WTC11 (cell line): ENCODE measurements at regions of chr6 and their contacts with region 1.

Region 1: GRCh38 chr6:3848925-3849605 is at the start of gene FAM50B:
- DNase-seq: peak; percentile 98
- ATAC-seq: peak; percentile 98
- H3K4me3 Mint-ChIP-seq: peak within 1 kb of the TSS; percentile 80
- H3K27ac Mint-ChIP-seq: no peak within 1 kb of the TSS
- H3K4me1 Mint-ChIP-seq: peaks cover 9% of the 10 kb centered on the region
- H3K27me3 Mint-ChIP-seq: peaks cover 6% of the 10 kb centered on the region
- CTCF ChIP-seq: peak; percentile 100
- total RNA-seq, gene FAM50B: 2.1 to 3.6 TPM (median 3.3 TPM) in 3 replicates

Region 2: DNA sequence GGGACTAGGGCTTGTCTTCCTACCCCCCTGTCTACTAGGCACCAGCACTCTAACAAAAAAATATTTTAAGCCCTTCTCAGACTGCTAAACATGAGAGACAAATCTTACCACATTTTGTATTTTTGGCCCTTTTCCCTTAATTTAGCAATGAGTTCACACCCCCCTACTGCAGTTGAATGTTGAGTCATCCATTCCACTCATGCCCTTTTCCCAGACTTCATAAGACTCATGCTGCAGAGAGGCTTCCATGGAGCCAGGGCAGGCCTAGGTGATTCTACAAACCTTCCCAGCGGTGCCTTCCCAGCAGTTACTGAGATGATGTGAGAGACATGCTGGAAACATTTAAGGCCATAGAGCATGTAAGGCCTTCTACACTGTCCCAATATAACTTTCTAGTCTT is 151.5 kb before region 1 on chr6:
- CTCF ChIA-PET with region 1: no interaction called
- POLR2A ChIA-PET with region 1: no interaction called
- DNase-seq: no peak
- ATAC-seq: no peak
- H3K4me3 Mint-ChIP-seq: no peak overlapping the region
- H3K27ac Mint-ChIP-seq: no peak overlapping the region
- H3K4me1 Mint-ChIP-seq: no peaks in the 10 kb centered on the region
- H3K27me3 Mint-ChIP-seq: peaks cover 9% of the 10 kb centered on the region
- CTCF ChIP-seq: no peak

Region 3: GRCh38 chr6:3759646-3760232 is 89.3 kb before region 1 on chr6:
- CTCF ChIA-PET with region 1: interaction called, 45 read pairs
- POLR2A ChIA-PET with region 1: no interaction called
- DNase-seq: no peak
- ATAC-seq: no peak
- H3K4me3 Mint-ChIP-seq: no peak overlapping the region
- H3K27ac Mint-ChIP-seq: no peak overlapping the region; the same call in 1 of the 2 replicates
- H3K4me1 Mint-ChIP-seq: peaks cover 26% of the 10 kb centered on the region
- H3K27me3 Mint-ChIP-seq: peaks cover 7% of the 10 kb centered on the region
- CTCF ChIP-seq: no peak

Region 4: DNA sequence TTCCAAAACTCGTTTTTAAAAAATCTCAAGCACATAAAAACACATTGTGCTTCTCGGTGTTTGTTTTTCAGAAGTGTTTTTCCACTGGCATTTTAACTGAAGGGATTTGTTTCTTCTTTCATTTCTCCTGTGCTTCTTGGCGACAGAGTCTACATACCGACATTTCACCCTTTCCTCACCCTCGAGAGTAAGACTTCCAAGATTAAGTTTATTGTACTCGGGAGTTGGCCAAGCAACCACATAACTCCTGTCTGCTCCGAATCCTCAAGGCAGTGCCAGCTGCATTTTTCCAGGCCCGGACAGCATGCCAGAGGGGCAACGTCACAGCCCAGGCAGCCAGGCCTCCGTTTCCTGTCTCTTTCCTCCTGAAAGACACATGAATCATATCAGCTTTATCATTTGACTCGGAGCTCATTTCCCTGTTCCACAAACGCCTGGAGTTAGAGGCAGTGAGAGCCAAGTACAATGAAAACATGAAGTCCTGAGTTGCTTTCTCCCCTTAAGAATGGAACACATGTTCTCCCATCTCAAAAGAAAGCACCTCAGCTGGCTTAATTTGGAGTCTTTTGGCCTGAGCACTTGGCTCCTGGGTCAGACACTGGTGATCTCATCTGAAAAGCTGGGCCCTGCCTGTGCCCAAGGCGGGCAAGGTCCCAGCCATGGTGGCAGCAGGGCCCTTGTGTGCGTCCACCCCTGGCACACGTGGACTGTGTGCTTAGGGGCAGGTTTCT is 23.0 kb before region 1 on chr6:
- CTCF ChIA-PET with region 1: interaction called, 26 read pairs
- POLR2A ChIA-PET with region 1: no interaction called
- DNase-seq: no peak
- ATAC-seq: no peak; the same call in 1 of the 2 replicates
- H3K4me3 Mint-ChIP-seq: no peak overlapping the region
- H3K27ac Mint-ChIP-seq: no peak overlapping the region
- H3K4me1 Mint-ChIP-seq: peaks cover 28% of the 10 kb centered on the region
- H3K27me3 Mint-ChIP-seq: peaks cover 3% of the 10 kb centered on the region; the same call in 1 of the 2 replicates
- CTCF ChIP-seq: no peak

Region 5: DNA sequence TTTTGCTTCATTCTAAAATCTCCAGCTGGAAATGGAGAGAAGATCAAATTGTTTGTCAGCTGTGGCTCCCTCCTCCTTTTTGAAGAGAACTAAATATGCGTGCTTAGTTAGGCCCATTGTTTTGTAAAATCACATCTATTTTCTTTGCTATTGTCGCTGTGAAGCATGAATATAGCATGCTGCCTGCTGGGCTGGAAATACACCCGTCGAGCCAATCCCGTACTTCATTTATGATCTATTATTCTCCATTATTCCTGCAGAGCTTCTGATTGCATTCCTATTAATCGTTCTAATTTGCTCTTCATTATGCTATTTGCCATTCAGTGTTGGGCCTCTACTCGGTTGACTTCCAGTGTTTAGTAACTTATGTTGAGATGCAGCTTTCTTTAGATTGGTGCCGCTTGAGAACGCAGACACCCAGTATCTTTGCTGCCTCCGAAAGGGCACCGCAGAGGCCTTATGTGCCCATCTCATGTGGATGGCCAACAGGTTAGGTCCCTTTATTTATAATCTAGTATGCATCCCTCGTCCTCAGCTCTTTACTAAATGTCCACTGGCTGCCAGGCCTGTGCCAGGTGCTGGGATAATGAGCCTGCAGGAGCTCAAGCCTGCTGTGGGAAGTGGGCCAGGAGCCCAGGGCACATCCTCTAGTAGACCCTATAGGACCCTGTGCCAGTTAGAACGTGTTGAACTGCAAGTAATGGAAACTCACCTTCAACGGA is 45.7 kb after region 1 on chr6:
- CTCF ChIA-PET with region 1: interaction called, 45 read pairs
- POLR2A ChIA-PET with region 1: no interaction called
- DNase-seq: no peak
- ATAC-seq: peak; percentile 59
- H3K4me3 Mint-ChIP-seq: peak overlapping the region; percentile 1
- H3K27ac Mint-ChIP-seq: peak overlapping the region; percentile 43; the same call in 1 of the 2 replicates
- H3K4me1 Mint-ChIP-seq: peaks cover 42% of the 10 kb centered on the region
- H3K27me3 Mint-ChIP-seq: peaks cover 7% of the 10 kb centered on the region
- CTCF ChIP-seq: no peak

Region 6: GRCh38 chr6:3943331-3943765 is 94.3 kb after region 1 on chr6:
- CTCF ChIA-PET with region 1: interaction called, 32 read pairs
- POLR2A ChIA-PET with region 1: no interaction called
- DNase-seq: no peak
- ATAC-seq: no peak
- H3K4me3 Mint-ChIP-seq: no peak overlapping the region
- H3K27ac Mint-ChIP-seq: no peak overlapping the region
- H3K4me1 Mint-ChIP-seq: peaks cover 14% of the 10 kb centered on the region
- H3K27me3 Mint-ChIP-seq: no peaks in the 10 kb centered on the region
- CTCF ChIP-seq: no peak

Region 7: DNA sequence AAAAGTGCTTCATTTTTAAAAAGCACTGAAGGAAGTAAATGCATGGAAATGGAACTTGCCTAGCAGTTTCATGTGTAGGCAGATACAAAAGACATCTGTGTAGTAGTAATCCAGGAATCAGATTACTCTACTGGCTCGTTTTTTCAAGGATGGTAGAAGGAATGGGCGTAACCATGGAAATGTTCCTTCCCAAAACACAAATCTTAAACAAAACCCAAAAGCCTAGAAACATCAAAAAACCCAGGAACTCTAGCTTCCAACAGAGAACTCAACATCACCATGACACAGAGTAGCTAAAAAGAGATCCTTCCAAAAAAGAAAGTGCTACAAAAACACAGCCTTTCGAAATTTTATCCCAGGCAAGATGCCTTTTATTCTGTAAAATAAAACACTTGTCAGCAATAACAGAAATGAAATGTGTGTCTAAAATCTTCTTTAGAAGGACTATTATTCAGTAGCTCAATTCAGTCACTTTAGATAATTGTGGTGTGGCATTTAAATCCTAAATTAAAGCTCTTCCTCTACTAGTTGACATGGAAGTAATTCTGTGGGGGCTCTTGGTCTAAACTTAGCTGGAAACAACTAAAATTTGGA is 148.2 kb after region 1 on chr6:
- CTCF ChIA-PET with region 1: interaction called, 28 read pairs
- POLR2A ChIA-PET with region 1: no interaction called
- DNase-seq: no peak
- ATAC-seq: no peak; the same call in 1 of the 2 replicates
- H3K4me3 Mint-ChIP-seq: no peak overlapping the region
- H3K27ac Mint-ChIP-seq: peak overlapping the region; percentile 82
- H3K4me1 Mint-ChIP-seq: peaks cover 29% of the 10 kb centered on the region
- H3K27me3 Mint-ChIP-seq: no peaks in the 10 kb centered on the region
- CTCF ChIP-seq: no peak